K562 (cell line): ENCODE measurements at regions of chr2 and their contacts with region 1.

Region 1: GRCh38 chr2:208072250-208072892 is 47.0 kb upstream of the PLEKHM3 start:
- DNase-seq: peak; percentile 41 to 81 (median 53)
- ATAC-seq: peak; percentile 97
- H3K4me3 ChIP-seq: no peak overlapping the region
- H3K27ac ChIP-seq: no peak overlapping the region
- H3K4me1 ChIP-seq: no peaks in the 10 kb centered on the region; a peak in 1 of 5 replicates
- H3K27me3 ChIP-seq: no peaks in the 10 kb centered on the region; a peak in 1 of 5 replicates
- CTCF ChIP-seq: peak; percentile 71 to 83 (median 74)
- EP300 ChIP-seq: no peak
- POLR2A ChIP-seq: no peak
- RAD21 ChIP-seq: peak; percentile 78 to 85

Region 2: DNA sequence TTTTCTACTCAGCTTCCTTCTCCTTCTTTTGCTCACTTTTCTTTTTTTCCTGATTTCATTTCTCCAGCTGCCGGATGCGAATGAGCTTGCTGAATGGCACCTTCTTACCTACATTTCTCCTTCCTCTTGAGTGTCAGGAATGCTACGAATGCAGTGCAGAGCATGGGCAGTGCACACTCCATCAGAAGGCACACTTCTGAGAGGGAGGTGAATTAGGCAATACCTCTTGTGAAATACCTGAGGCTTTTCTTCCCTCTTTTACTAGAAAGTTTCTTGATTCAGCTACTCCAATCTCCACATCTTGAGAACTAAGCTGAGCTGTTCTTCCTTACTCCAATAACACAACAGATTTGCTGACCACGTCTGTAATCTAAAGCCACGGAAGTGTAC is 98.2 kb before region 1 on chr2:
- CTCF ChIA-PET with region 1: no interaction called
- POLR2A ChIA-PET with region 1: no interaction called
- in situ Hi-C with region 1: no loop called
- intact Hi-C with region 1: loop called (anchors 2 kb)
- DNase-seq: no peak
- ATAC-seq: no peak
- H3K4me3 ChIP-seq: no peak overlapping the region
- H3K27ac ChIP-seq: no peak overlapping the region
- H3K4me1 ChIP-seq: peaks cover 0 to 2% of the 10 kb centered on the region in 2 experiments; a peak in 1 of 5 replicates
- H3K27me3 ChIP-seq: no peaks in the 10 kb centered on the region
- CTCF ChIP-seq: no peak
- EP300 ChIP-seq: no peak
- POLR2A ChIP-seq: no peak
- RAD21 ChIP-seq: no peak

Region 3: DNA sequence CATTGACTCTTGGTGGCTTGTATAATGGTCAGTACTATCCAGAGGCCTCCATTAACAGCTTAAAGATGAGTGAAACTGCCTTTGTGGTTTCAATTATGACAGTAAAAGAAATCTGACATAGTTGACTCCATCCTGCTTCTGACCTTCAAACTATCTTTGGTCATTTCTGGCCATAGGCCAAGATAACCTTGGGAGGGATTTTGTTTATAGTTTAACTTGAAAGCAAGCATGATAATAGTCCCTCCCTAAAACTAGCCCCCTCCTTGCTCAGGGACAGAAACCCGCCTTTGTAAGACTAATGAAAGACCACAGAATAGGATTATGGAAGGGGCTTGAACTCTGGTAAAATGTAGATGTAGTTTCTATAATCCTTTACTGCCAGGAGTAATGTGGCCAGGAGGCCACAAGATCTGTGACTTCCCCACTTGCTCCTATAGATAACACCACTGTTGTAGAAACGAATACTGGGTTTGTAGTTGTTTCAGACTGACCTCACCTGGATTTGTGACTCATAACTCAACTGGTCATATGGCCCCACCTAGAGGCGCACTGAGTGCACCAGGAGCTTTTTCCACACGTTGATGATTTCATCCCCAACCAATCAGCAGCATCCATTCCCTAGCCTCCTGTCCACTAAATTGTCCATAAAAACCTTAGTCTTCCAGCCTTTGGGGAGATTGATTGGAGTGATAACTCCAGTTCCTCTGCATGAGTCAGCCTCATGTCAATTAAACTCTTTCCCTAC is 38.4 kb before region 1 on chr2:
- CTCF ChIA-PET with region 1: no interaction called
- POLR2A ChIA-PET with region 1: no interaction called
- in situ Hi-C with region 1: no loop called
- intact Hi-C with region 1: loop called (anchors 5 kb)
- DNase-seq: peak; percentile 51 to 68 (median 54)
- ATAC-seq: peak; percentile 97
- H3K4me3 ChIP-seq: no peak overlapping the region
- H3K27ac ChIP-seq: no peak overlapping the region
- H3K4me1 ChIP-seq: no peaks in the 10 kb centered on the region; a peak in 1 of 5 replicates
- H3K27me3 ChIP-seq: no peaks in the 10 kb centered on the region
- CTCF ChIP-seq: peak; percentile 47 to 71 (median 55)
- EP300 ChIP-seq: no peak; the same call in 1 of the 2 replicates
- POLR2A ChIP-seq: no peak
- RAD21 ChIP-seq: peak; percentile 46 to 73

Region 4: GRCh38 chr2:208040199-208041171 is 31.9 kb before region 1 on chr2:
- CTCF ChIA-PET with region 1: no interaction called
- POLR2A ChIA-PET with region 1: interaction called, 4 read pairs
- in situ Hi-C with region 1: no loop called
- intact Hi-C with region 1: loop called (anchors 2 kb)
- DNase-seq: peak; percentile 41 to 72 (median 54)
- ATAC-seq: peak; percentile 86
- H3K4me3 ChIP-seq: no peak overlapping the region
- H3K27ac ChIP-seq: no peak overlapping the region
- H3K4me1 ChIP-seq: no peaks in the 10 kb centered on the region
- H3K27me3 ChIP-seq: no peaks in the 10 kb centered on the region
- CTCF ChIP-seq: peak; percentile 69 to 79 (median 71)
- EP300 ChIP-seq: no peak
- POLR2A ChIP-seq: no peak
- RAD21 ChIP-seq: peak; percentile 11 to 55; a peak in 2 of 4 replicates

Region 5: GRCh38 chr2:208698114-208698513 is 625.7 kb after region 1 on chr2:
- CTCF ChIA-PET with region 1: no interaction called
- POLR2A ChIA-PET with region 1: no interaction called
- in situ Hi-C with region 1: no loop called
- intact Hi-C with region 1: no loop called
- DNase-seq: no peak
- ATAC-seq: no peak
- H3K4me3 ChIP-seq: no peak overlapping the region
- H3K27ac ChIP-seq: no peak overlapping the region
- H3K4me1 ChIP-seq: no peaks in the 10 kb centered on the region
- H3K27me3 ChIP-seq: no peaks in the 10 kb centered on the region
- CTCF ChIP-seq: no peak
- EP300 ChIP-seq: no peak
- POLR2A ChIP-seq: no peak
- RAD21 ChIP-seq: no peak